Activated CD4-positive, alpha-beta T cell treated with anti-CD3 and anti-CD28 coated beads, Interleukin-2, amount 10 ng/mL, durations not matched to agents 24 days and 14 days (primary cell): ENCODE measurements at regions of chr2 and their contacts with region 1.

Region 1: GRCh38 chr2:152421521-152422370 is 86.8 kb downstream of the FMNL2 start:
- DNase-seq: peak; percentile 60
- H3K4me3 Mint-ChIP-seq: no peak overlapping the region
- H3K27ac Mint-ChIP-seq: peak overlapping the region; percentile 38
- H3K4me1 Mint-ChIP-seq: peaks cover 18% of the 10 kb centered on the region
- H3K27me3 Mint-ChIP-seq: peaks cover 1% of the 10 kb centered on the region

Region 2: GRCh38 chr2:152407204-152407721 is 14.5 kb before region 1 on chr2:
- intact Hi-C with region 1: loop called (anchors 2 kb)
- DNase-seq: peak; percentile 81
- H3K4me3 Mint-ChIP-seq: peak overlapping the region; percentile 78
- H3K27ac Mint-ChIP-seq: peak overlapping the region; percentile 91
- H3K4me1 Mint-ChIP-seq: peaks cover 54% of the 10 kb centered on the region
- H3K27me3 Mint-ChIP-seq: no peaks in the 10 kb centered on the region

Region 3: DNA sequence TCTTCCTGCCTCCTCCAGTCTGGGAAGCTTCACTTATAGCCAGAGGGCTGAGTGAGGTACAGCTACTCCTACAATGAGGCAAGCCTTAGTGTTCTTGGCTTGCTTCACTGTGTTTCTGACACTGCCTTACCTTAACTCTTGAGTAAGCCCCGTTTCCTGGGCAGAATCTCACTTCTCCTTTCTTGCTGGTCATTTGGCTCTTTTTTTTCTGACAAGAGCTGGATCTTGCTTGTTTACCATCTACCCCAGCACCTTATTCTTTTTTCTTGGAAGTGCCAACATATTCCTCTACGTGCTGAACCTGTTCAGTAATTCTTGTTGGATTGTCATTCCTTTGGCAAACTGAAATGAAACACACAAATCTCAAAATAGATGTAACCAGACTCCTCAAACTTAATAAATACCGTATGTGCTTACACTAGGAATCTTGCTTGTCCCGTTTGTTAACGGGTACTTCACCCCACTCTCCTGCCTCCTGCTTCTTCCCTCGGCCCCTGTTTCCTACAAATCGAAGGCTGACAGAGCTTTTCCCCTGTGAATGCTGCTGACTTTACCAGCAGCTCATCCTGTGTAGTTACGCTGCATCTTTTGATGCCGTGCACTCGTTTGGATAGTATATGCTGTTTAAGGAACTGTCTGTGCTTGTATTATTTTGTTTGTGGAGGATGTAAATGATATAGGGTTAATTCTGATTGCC is 45.4 kb after region 1 on chr2:
- intact Hi-C with region 1: no loop called
- DNase-seq: no peak
- H3K4me3 Mint-ChIP-seq: no peak overlapping the region
- H3K27ac Mint-ChIP-seq: no peak overlapping the region
- H3K4me1 Mint-ChIP-seq: peaks cover 9% of the 10 kb centered on the region
- H3K27me3 Mint-ChIP-seq: peaks cover 9% of the 10 kb centered on the region

Region 4: GRCh38 chr2:152497481-152498052 is 75.8 kb after region 1 on chr2:
- intact Hi-C with region 1: no loop called
- DNase-seq: no peak
- H3K4me3 Mint-ChIP-seq: no peak overlapping the region
- H3K27ac Mint-ChIP-seq: no peak overlapping the region
- H3K4me1 Mint-ChIP-seq: peaks cover 6% of the 10 kb centered on the region
- H3K27me3 Mint-ChIP-seq: peaks cover 4% of the 10 kb centered on the region

Region 5: GRCh38 chr2:153819501-153819900 is 1397.8 kb after region 1 on chr2:
- intact Hi-C with region 1: no loop called
- DNase-seq: no peak
- H3K4me3 Mint-ChIP-seq: no peak overlapping the region
- H3K27ac Mint-ChIP-seq: no peak overlapping the region
- H3K4me1 Mint-ChIP-seq: no peaks in the 10 kb centered on the region
- H3K27me3 Mint-ChIP-seq: no peaks in the 10 kb centered on the region